Activated B cell treated with CpG ODN at 0.5 μM for 24 hours (primary cell): ENCODE measurements at regions of chr15 and their contacts with region 1.

Region 1: GRCh38 chr15:80052597-80053300 is 6.7 kb upstream of the ZFAND6 start:
- DNase-seq: no peak
- ATAC-seq: peak; percentile 56
- H3K4me3 Mint-ChIP-seq: no peak overlapping the region
- H3K27ac Mint-ChIP-seq: peak overlapping the region; percentile 46
- H3K4me1 Mint-ChIP-seq: peaks cover 30% of the 10 kb centered on the region
- H3K27me3 Mint-ChIP-seq: no peaks in the 10 kb centered on the region
- CTCF ChIP-seq: no peak

Region 2: DNA sequence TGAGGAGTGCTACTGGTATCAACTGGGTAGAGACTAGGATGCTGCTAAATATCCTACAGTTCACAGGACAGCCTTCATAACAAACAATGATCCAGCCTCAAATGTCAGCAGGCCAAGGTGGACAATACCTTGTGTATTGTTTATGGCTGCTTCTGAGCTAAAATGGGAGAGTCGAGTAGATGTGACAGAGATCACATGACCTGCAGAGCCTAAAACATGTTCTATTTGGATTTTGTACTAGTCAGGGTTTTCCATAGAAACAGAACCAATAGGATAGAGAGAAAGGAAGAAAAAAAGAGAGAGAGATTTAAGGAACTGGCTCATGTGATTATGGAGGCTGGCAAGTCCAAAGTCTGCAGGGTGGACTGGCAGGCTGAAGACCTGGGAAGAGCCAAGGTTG is 14.9 kb before region 1 on chr15:
- CTCF ChIA-PET with region 1: no interaction called
- POLR2A ChIA-PET with region 1: interaction called, 10 read pairs
- intact Hi-C with region 1: loop called (anchors 2 kb)
- DNase-seq: no peak
- ATAC-seq: no peak
- H3K4me3 Mint-ChIP-seq: no peak overlapping the region
- H3K27ac Mint-ChIP-seq: no peak overlapping the region
- H3K4me1 Mint-ChIP-seq: peaks cover 24% of the 10 kb centered on the region
- H3K27me3 Mint-ChIP-seq: no peaks in the 10 kb centered on the region
- CTCF ChIP-seq: no peak

Region 3: GRCh38 chr15:80072285-80072994 is 19.7 kb after region 1 on chr15:
- CTCF ChIA-PET with region 1: no interaction called
- POLR2A ChIA-PET with region 1: interaction called, 10 read pairs
- intact Hi-C with region 1: no loop called
- DNase-seq: no peak
- ATAC-seq: peak; percentile 89
- H3K4me3 Mint-ChIP-seq: peak overlapping the region; percentile 69
- H3K27ac Mint-ChIP-seq: peak overlapping the region; percentile 53
- H3K4me1 Mint-ChIP-seq: peaks cover 80% of the 10 kb centered on the region
- H3K27me3 Mint-ChIP-seq: no peaks in the 10 kb centered on the region
- CTCF ChIP-seq: no peak

Region 4: GRCh38 chr15:80087100-80087499 is 34.4 kb after region 1 on chr15:
- CTCF ChIA-PET with region 1: no interaction called
- POLR2A ChIA-PET with region 1: no interaction called
- intact Hi-C with region 1: no loop called
- DNase-seq: no peak
- ATAC-seq: no peak
- H3K4me3 Mint-ChIP-seq: no peak overlapping the region
- H3K27ac Mint-ChIP-seq: no peak overlapping the region
- H3K4me1 Mint-ChIP-seq: peaks cover 60% of the 10 kb centered on the region
- H3K27me3 Mint-ChIP-seq: no peaks in the 10 kb centered on the region
- CTCF ChIP-seq: no peak

Region 5: DNA sequence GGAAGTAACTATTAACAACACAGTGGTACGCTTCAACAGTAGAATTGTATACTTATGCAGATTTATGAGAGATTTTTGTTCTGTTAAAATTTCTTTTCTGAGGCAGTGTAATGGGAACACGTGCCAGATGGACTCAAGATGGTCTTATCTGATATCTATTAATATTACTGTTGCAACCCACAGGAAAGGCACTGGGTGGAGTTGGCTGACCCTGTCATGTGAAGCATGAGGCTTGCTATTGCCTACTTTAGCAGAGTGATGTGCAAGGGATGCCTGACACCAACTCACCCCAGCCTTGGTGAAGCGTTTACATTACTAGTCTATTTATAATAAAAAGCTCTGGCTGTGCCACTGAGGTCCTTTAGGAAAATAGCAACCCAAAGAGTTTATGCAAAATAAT is 331.7 kb after region 1 on chr15:
- CTCF ChIA-PET with region 1: no interaction called
- POLR2A ChIA-PET with region 1: no interaction called
- intact Hi-C with region 1: no loop called
- DNase-seq: no peak
- ATAC-seq: no peak
- H3K4me3 Mint-ChIP-seq: no peak overlapping the region
- H3K27ac Mint-ChIP-seq: no peak overlapping the region
- H3K4me1 Mint-ChIP-seq: no peaks in the 10 kb centered on the region
- H3K27me3 Mint-ChIP-seq: peaks cover 19% of the 10 kb centered on the region
- CTCF ChIP-seq: no peak